ENCODE measurements at regions of chr15 and their contacts with region 1.

Region 1: DNA sequence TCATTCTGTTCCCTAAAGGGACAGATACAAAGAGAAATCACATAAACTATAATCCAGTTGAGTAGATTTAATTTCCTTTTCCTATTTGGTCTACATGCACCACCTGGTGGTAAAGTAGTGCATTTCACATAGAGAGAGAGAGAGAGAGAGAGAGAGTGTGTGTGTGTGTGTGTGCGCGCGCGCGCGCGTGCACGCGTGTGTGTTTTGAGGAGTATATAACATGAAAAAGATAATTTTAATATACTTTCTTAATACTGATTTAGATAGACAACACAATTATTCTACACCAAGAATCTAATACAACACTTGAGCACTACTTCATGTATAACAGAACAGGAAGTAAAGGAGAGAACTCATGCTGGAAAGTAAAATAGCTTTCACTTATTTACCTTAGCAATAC is 1.1 kb upstream of the FGF7 start:
- DNase-seq: peak in 3 of 4 donors; percentile 47 to 69 (median 57)
- ATAC-seq: peak; percentile 91
- H3K4me3 ChIP-seq: peak overlapping the region in 1 of 2 donors; percentile 15
- H3K27ac ChIP-seq: peak overlapping the region in 1 of 2 donors; percentile 71
- H3K4me1 ChIP-seq: peaks cover 0 to 3% of the 10 kb centered on the region in 2 donors
- H3K27me3 ChIP-seq: no peaks in the 10 kb centered on the region
- CTCF ChIP-seq: peak; percentile 68 to 76

Region 2: DNA sequence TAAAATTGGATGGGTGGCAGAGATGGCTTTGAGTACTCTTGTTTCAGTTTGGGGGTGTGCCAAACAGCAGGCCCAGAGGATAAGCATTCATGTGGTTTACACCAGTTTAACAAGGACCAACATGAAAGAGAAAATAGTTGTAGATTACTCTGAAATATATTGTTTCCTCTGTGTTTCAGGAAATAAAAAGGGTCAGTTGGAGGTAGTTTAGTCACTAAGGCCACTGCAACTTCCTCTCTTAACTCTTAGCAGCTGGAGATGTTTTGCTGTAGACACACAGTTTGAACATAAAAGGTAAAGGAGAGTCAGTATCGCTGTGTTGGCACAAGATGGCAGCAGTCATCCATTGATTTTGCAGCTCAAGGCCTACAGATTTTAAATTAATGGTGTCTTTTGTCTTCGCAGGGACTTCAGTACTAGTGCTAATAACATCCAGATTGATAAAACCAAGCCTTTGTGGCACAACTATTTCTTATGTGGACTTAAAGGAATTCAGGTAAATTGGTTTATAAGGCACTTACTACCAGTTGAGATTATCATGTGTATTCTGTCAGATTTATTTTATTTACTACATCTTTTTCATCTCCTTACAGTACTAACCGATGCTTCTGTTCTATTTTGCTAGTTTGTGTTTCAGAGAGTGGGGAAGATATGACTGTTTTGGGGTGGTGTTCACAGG is 186.4 kb before region 1 on chr15:
- intact Hi-C with region 1: loop called in 1 of 2 experiments (anchors 10 kb)
- DNase-seq: peak in 2 of 4 donors; percentile 72 to 85
- ATAC-seq: peak; percentile 93
- H3K4me3 ChIP-seq: no peak overlapping the region
- H3K27ac ChIP-seq: no peak overlapping the region
- H3K4me1 ChIP-seq: peaks cover 4 to 24% of the 10 kb centered on the region in 2 donors
- H3K27me3 ChIP-seq: no peaks in the 10 kb centered on the region
- CTCF ChIP-seq: peak; percentile 48 to 75

Region 3: GRCh38 chr15:49366496-49366895 is 55.5 kb before region 1 on chr15:
- intact Hi-C with region 1: no loop called
- DNase-seq: peak in 1 of 4 donors; percentile 60
- ATAC-seq: no peak
- H3K4me3 ChIP-seq: no peak overlapping the region
- H3K27ac ChIP-seq: no peak overlapping the region
- H3K4me1 ChIP-seq: no peaks in the 10 kb centered on the region
- H3K27me3 ChIP-seq: no peaks in the 10 kb centered on the region
- CTCF ChIP-seq: no peak